ENCODE measurements at regions of chr17 and their contacts with region 1.

Region 1: DNA sequence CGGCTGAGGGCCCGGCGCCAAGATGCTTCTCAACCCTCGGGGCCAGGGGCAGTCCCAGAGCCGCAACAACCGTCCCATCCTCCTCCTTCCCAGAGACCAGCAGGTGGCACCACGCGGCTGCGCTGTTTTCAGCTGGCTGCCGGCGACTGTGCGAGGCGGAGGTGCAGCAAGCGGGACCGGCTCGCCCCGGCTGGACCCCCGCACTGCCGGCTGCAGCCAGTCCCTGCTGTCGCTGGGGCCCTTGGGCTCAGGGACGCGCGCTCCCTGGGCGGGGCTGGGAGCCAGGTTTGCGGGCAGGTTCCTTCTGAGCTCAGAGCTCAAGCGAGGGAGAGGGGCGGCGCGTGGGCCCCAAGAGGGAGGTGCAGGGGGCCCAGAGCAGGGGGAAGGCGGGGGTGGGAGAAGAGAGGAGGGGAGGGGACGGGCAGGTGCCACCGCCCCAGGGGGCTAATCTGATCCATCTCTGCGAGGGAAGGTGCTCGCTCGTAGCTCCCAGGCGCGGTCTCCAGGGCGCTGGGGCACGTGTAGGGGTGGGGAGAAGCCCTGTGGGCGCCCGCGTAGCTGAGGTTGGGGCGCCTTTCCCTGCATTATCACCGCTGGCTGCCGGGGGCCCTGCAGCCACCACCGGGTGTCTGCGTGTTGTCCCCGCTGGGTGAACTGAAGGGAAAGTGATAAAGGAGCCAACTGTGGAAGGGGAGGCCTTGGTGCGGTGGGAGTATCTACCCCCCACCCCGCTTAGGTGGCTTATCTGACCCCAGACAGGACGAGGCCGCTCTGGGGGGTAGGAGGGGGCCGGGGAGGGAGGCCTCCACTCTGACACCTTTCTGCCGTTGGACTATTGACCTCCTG is 24.2 kb downstream of the STAT5A start:
- DNase-seq: peak; percentile 89 to 97 (median 91)
- ATAC-seq: peak; percentile 69
- H3K4me3 ChIP-seq: peak overlapping the region; percentile 13
- H3K27ac ChIP-seq: peak overlapping the region; percentile 100
- H3K4me1 ChIP-seq: peaks cover 81 to 89% of the 10 kb centered on the region in 2 experiments
- H3K27me3 ChIP-seq: no peaks in the 10 kb centered on the region
- CTCF ChIP-seq: peak; percentile 69 to 81 (median 70)
- EP300 ChIP-seq: peak; percentile 96
- POLR2A ChIP-seq: peak; percentile 86
- RAD21 ChIP-seq: peak; percentile 60 to 71

Region 2: DNA sequence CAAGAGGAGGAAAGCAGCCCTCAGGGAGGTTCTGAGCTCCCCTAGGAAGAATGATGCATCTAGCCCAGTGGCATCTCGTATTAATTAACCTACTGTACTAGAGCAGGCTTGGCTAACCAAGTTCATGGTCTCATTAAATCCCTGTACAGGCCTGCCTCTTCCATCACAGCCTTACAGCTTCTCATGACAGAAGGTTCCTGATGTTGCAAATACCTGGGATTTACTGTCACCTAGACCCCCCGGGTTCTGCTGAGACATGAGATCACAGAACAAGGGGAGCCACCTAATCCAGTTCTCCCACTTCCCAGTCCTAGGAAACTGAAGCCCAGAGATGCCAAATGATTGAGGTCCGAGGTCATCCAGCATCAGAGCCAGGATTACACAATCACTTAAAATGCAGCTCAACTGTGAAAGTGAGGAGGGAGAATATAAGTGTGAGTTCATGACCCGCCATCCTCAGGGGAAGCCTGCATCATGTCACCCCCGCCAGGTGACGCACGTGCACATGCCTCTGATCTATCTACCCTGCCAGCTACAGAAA is 417.6 kb before region 1 on chr17:
- CTCF ChIA-PET with region 1: no interaction called
- POLR2A ChIA-PET with region 1: no interaction called
- in situ Hi-C with region 1: no loop called
- intact Hi-C with region 1: no loop called
- DNase-seq: no peak
- ATAC-seq: no peak
- H3K4me3 ChIP-seq: no peak overlapping the region
- H3K27ac ChIP-seq: no peak overlapping the region
- H3K4me1 ChIP-seq: no peaks in the 10 kb centered on the region
- H3K27me3 ChIP-seq: no peaks in the 10 kb centered on the region
- CTCF ChIP-seq: no peak
- EP300 ChIP-seq: no peak
- POLR2A ChIP-seq: no peak
- RAD21 ChIP-seq: no peak

Region 3: GRCh38 chr17:42019509-42020404 is 292.8 kb before region 1 on chr17 and contains the start of gene NKIRAS2:
- CTCF ChIA-PET with region 1: no interaction called
- POLR2A ChIA-PET with region 1: no interaction called
- in situ Hi-C with region 1: no loop called
- intact Hi-C with region 1: loop called (anchors 5 kb)
- DNase-seq: peak; percentile 90 to 96 (median 92)
- ATAC-seq: peak; percentile 77
- H3K4me3 ChIP-seq: peak within 1 kb of the TSS; percentile 91
- H3K27ac ChIP-seq: peak within 1 kb of the TSS; percentile 73
- H3K4me1 ChIP-seq: peaks cover 39 to 45% of the 10 kb centered on the region in 2 experiments
- H3K27me3 ChIP-seq: no peaks in the 10 kb centered on the region
- CTCF ChIP-seq: peak; percentile 90 to 93 (median 91)
- EP300 ChIP-seq: peak; percentile 52
- POLR2A ChIP-seq: peak; percentile 80
- RAD21 ChIP-seq: no peak
- polyA plus RNA-seq, gene NKIRAS2: 10.1 to 14.6 TPM

Region 4: GRCh38 chr17:42266918-42267778 is 45.4 kb before region 1 on chr17:
- CTCF ChIA-PET with region 1: no interaction called
- POLR2A ChIA-PET with region 1: interaction called, 12 read pairs
- in situ Hi-C with region 1: no loop called
- intact Hi-C with region 1: no loop called
- DNase-seq: peak; percentile 41 to 91 (median 50)
- ATAC-seq: peak; percentile 78
- H3K4me3 ChIP-seq: no peak overlapping the region
- H3K27ac ChIP-seq: peak overlapping the region; percentile 93
- H3K4me1 ChIP-seq: peaks cover 14 to 21% of the 10 kb centered on the region in 2 experiments
- H3K27me3 ChIP-seq: no peaks in the 10 kb centered on the region
- CTCF ChIP-seq: no peak
- EP300 ChIP-seq: peak; percentile 72
- POLR2A ChIP-seq: peak; percentile 79
- RAD21 ChIP-seq: peak in 1 of 2 experiments; percentile 5; a peak in 1 of 4 replicates

Region 5: DNA sequence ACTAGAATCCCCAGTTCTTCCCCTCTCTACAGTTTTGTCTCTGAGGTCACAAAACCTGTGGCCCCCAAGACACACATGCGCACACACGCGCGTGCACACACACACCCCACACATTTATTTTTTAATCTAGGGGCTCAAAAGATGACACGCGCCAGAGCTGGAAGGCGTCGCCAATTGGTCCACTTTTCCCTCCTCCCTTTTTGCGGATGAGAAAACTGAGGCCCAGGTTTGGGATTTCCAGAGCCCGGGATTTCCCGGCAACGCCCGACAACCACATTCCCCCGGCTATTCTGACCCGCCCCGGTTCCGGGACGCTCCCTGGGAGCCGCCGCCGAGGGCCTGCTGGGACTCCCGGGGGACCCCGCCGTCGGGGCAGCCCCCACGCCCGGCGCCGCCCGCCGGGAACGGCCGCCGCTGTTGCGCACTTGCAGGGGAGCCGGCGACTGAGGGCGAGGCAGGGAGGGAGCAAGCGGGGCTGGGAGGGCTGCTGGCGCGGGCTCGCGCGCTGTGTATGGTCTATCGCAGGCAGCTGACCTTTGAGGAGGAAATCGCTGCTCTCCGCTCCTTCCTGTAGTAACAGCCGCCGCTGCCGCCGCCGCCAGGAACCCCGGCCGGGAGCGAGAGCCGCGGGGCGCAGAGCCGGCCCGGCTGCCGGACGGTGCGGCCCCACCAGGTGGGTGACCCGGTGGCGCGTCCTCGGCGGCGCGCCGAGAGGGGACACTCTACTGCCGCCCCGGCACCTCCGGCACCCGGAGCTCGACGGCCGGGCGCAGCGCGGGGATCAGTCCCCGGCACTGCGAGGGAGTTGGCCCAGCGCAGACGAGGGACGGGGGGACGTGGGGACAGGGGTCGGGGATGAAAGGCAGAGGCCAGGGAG is 24.3 kb before region 1 on chr17 and contains the start of gene STAT5A:
- CTCF ChIA-PET with region 1: no interaction called
- POLR2A ChIA-PET with region 1: interaction called, 13 read pairs
- in situ Hi-C with region 1: no loop called
- intact Hi-C with region 1: loop called (anchors 2 kb)
- DNase-seq: peak; percentile 57 to 75 (median 68)
- ATAC-seq: peak; percentile 45
- H3K4me3 ChIP-seq: peak within 1 kb of the TSS; percentile 88
- H3K27ac ChIP-seq: peak within 1 kb of the TSS; percentile 78
- H3K4me1 ChIP-seq: peaks cover 36 to 64% of the 10 kb centered on the region in 2 experiments
- H3K27me3 ChIP-seq: no peaks in the 10 kb centered on the region
- CTCF ChIP-seq: no peak
- EP300 ChIP-seq: no peak
- POLR2A ChIP-seq: no peak; the same call in 1 of the 2 replicates
- RAD21 ChIP-seq: no peak
- polyA plus RNA-seq, gene STAT5A: 79.9 to 81.8 TPM

Region 6: DNA sequence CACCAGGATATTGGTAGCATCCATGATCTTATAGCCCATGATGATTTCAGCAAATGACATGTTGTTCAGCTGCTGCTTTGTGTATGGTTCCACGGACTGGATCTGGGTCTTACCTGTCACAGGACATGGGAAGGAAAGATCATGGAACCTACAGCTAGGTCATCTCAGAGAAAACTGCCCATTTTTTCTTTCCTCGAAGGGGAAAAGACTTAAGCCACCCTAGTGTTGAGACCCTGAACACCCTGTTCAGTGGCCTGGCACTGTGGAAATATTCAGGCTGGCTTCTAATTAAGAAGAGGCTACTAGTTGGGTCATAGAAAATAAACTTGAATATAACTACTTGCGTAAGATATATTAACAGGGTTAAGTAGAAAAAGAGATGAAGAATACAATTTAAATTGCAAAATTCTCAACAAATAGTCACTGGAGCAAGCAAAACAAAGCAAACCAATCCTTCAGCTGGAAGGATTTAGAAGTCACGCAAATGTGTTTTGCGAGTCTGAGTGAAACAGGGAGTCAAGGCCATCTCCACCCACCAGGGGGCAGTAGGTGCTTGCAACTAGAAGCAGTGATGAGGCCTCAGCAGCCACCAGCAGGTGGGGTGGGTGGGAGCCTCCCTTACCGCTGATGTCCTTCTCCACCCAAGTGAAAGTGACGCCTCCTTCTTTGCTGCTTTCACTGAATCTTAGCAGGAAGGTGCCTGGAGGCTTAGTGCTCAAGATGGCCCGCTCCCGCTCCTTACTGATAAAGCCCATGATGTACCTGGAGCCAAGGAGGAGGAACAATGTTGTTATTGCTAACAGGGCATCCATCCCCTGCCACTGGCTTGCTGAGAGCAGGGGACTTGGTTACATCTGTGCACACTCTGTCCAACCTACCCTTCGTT is 10.1 kb after region 1 on chr17:
- CTCF ChIA-PET with region 1: interaction called, 3 read pairs
- POLR2A ChIA-PET with region 1: interaction called, 5 read pairs
- in situ Hi-C with region 1: no loop called
- intact Hi-C with region 1: loop called (anchors 1 kb)
- DNase-seq: peak; percentile 91 to 98 (median 93)
- ATAC-seq: peak; percentile 80
- H3K4me3 ChIP-seq: no peak overlapping the region
- H3K27ac ChIP-seq: peak overlapping the region; percentile 100
- H3K4me1 ChIP-seq: peaks cover 46 to 50% of the 10 kb centered on the region in 2 experiments
- H3K27me3 ChIP-seq: no peaks in the 10 kb centered on the region
- CTCF ChIP-seq: peak; percentile 100
- EP300 ChIP-seq: no peak; the same call in 1 of the 2 replicates
- POLR2A ChIP-seq: no peak
- RAD21 ChIP-seq: peak; percentile 99

Region 7: DNA sequence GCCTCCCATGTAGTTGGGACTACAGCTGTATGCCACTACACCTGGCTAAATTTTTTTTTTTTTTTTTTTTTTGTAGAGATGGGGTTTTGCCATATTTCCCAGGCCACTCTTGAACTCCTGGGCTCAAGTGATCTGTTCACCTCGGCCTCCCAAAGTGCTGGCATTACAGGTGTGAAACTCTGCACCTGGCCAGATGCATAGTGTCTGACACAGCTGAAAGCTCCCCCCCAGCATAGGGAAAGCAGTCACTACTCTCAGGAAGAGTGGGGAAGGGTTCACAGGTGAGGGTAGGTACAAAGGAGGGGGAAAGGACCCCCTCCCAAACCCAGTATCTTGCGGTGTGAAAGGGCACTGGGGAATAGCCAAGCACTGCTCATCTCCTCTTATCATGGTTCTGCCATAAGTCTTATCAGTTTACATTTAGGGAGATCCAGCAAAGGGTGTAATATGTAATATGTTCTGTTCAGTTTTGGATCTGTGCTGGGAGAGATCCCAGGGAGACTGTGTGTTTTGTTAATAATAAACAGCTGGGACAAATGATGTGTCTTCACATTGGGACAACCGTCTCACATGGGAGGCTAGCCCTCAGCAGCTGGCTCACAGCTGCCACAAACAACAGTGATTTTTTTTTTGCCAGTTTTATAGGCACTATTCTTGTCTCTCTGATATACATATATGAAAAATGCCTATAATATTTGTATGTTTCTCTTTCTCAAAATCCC is 117.4 kb after region 1 on chr17:
- CTCF ChIA-PET with region 1: no interaction called
- POLR2A ChIA-PET with region 1: no interaction called
- in situ Hi-C with region 1: no loop called
- intact Hi-C with region 1: no loop called
- DNase-seq: no peak
- ATAC-seq: no peak
- H3K4me3 ChIP-seq: no peak overlapping the region
- H3K27ac ChIP-seq: no peak overlapping the region
- H3K4me1 ChIP-seq: peaks cover 5 to 10% of the 10 kb centered on the region in 2 experiments; a peak in 3 of 5 replicates
- H3K27me3 ChIP-seq: no peaks in the 10 kb centered on the region
- CTCF ChIP-seq: no peak
- EP300 ChIP-seq: no peak
- POLR2A ChIP-seq: no peak
- RAD21 ChIP-seq: no peak